Right cardiac atrium (tissue), 5 donors: ENCODE measurements at regions of chr19 and their contacts with region 1.

Region 1: DNA sequence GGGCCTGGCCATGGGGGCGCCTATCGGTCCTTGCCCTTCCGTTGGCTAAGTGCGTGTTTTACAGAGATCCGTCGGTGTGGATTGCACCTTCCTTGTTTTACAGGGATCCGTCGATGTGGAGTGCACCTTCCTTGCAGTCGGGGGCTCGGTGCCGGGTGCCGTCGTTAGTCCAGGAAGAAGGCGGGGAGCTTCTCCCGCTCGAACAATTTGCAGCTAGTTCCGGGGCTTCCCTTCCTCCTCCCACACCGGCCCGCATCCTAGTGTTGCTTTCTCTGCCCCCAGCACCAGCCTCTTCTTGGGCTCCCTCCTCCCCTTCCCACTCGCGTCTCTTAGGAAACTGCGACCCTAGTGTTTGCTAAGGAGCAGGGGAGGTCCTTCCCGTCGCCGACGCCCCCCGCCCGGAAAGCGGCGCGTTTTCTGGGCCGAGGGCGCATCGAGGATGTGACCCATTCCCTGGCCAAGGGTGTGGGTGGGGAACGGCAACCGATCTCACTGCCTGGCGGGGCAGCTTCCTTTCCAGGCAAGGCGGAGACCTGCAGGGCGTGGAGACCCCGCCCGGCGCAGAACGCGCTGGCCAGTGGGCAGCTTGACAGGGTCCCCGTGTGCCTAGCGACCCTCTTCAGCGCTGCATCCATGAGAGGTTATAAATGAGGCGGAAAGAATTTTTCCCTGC is 75.7 kb upstream of the ZNF91 start:
- DNase-seq: peak in 2 of 3 donors; percentile 31 to 48
- ATAC-seq: peak in 1 of 2 donors; percentile 41
- H3K4me3 ChIP-seq: peak overlapping the region; percentile 0
- H3K27ac ChIP-seq: no peak overlapping the region
- H3K4me1 ChIP-seq: no peaks in the 10 kb centered on the region
- H3K27me3 ChIP-seq: no peaks in the 10 kb centered on the region

Region 2: GRCh38 chr19:23321948-23322549 is 149.0 kb before region 1 on chr19:
- intact Hi-C with region 1: loop called in 3 of 4 experiments (anchors 2 to 5 kb)
- DNase-seq: no peak
- ATAC-seq: no peak
- H3K4me3 ChIP-seq: no peak overlapping the region
- H3K27ac ChIP-seq: no peak overlapping the region
- H3K4me1 ChIP-seq: no peaks in the 10 kb centered on the region
- H3K27me3 ChIP-seq: no peaks in the 10 kb centered on the region

Region 3: GRCh38 chr19:23395041-23395721 is 75.8 kb before region 1 on chr19 and contains the start of gene ZNF91:
- intact Hi-C with region 1: no loop called
- DNase-seq: peak; percentile 96 to 98 (median 97)
- ATAC-seq: peak; percentile 99
- H3K4me3 ChIP-seq: peak within 1 kb of the TSS; percentile 91
- H3K27ac ChIP-seq: peak within 1 kb of the TSS; percentile 89
- H3K4me1 ChIP-seq: peaks cover 2% of the 10 kb centered on the region
- H3K27me3 ChIP-seq: no peaks in the 10 kb centered on the region
- total RNA-seq, gene ZNF91: 94.4 to 170 (median 139) TPM